MCF 10A (cell line): ENCODE measurements at regions of chr5 and their contacts with region 1.

Region 1: DNA sequence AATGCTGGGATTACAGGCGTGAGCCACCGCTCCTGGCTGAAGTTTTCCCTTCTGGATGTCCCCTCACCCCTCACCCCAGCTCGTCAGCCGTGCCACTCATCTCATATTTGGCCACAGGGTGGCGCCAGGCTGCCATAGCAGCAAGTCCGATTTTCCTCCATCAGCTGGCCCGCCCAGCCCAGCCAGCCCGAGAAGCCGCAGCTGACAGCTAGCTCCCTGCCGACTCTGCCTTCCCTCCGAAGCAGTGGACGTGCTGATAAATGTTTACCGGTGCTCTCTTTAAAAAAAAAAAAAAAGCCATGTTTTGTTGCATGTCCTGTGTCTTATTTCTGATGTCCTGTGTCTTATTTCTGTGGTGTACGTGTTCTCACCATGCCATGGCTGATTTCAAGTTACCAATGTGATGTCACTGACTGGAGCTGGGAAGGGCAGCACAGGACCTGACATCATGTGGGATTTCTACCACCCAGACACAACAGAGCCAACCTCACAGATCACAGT is 58.3 kb downstream of the PFDN1 start:
- DNase-seq: peak; percentile 91
- H3K4me3 Mint-ChIP-seq: no peak overlapping the region
- H3K27ac Mint-ChIP-seq: no peak overlapping the region
- H3K4me1 Mint-ChIP-seq: peaks cover 36% of the 10 kb centered on the region
- H3K27me3 Mint-ChIP-seq: no peaks in the 10 kb centered on the region
- CTCF ChIP-seq: peak; percentile 94

Region 2: GRCh38 chr5:138565100-138565821 is 1679.3 kb before region 1 on chr5:
- CTCF ChIA-PET with region 1: no interaction called
- POLR2A ChIA-PET with region 1: no interaction called
- intact Hi-C with region 1: no loop called
- DNase-seq: no peak
- H3K4me3 Mint-ChIP-seq: no peak overlapping the region
- H3K27ac Mint-ChIP-seq: no peak overlapping the region
- H3K4me1 Mint-ChIP-seq: peaks cover 29% of the 10 kb centered on the region
- H3K27me3 Mint-ChIP-seq: no peaks in the 10 kb centered on the region
- CTCF ChIP-seq: no peak

Region 3: DNA sequence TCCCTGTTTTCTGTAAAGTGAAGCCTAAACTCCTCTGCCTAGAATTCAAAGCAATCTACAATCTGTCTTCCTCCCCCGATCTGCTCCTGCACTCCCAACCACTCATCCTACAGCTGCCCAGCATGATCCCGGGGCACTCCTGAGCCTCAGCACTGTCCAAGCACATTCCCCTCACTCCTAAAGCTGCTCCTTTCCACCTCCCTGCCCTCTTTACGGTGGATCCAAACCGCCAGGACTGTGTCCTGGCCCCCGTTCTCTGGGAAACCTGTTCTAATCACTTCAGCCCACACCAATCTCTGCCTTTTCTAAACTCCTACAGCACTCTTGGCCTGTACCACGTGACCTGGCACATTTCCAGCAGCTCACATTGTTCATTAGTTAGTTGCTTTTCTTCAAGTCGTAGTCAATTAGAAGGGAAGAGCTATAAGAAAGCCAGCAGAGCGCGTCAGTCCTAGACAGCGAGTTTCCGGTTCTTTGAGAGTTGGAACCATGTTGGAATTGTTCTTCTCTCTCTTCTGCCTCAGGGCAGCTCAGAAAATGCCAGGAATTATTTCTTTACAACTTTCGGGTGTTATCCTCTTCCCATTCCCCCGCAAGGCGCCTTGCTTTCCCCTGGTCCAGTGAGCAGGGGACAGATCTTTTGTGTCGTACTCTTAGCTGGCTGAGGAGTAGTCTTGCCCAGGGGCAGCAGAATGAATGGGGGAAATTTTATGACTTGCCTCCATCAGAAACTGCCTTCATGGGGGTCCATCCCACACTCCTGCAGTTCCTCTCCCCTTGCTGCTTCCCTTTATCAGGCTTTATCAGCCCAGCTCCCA is 262.2 kb before region 1 on chr5:
- CTCF ChIA-PET with region 1: no interaction called
- POLR2A ChIA-PET with region 1: no interaction called
- intact Hi-C with region 1: no loop called
- DNase-seq: peak; percentile 59
- H3K4me3 Mint-ChIP-seq: no peak overlapping the region
- H3K27ac Mint-ChIP-seq: no peak overlapping the region
- H3K4me1 Mint-ChIP-seq: peaks cover 12% of the 10 kb centered on the region
- H3K27me3 Mint-ChIP-seq: peaks cover 36% of the 10 kb centered on the region
- CTCF ChIP-seq: no peak

Region 4: GRCh38 chr5:140042643-140043500 is 201.7 kb before region 1 on chr5 and contains the start of gene NRG2:
- CTCF ChIA-PET with region 1: no interaction called
- POLR2A ChIA-PET with region 1: no interaction called
- intact Hi-C with region 1: no loop called
- DNase-seq: peak; percentile 63
- H3K4me3 Mint-ChIP-seq: peak within 1 kb of the TSS; percentile 69
- H3K27ac Mint-ChIP-seq: no peak within 1 kb of the TSS
- H3K4me1 Mint-ChIP-seq: peaks cover 32% of the 10 kb centered on the region
- H3K27me3 Mint-ChIP-seq: peaks cover 23% of the 10 kb centered on the region
- CTCF ChIP-seq: peak; percentile 57
- total RNA-seq, gene NRG2: 0.23 TPM in 1 of 2 replicates, not detected in the other

Region 5: DNA sequence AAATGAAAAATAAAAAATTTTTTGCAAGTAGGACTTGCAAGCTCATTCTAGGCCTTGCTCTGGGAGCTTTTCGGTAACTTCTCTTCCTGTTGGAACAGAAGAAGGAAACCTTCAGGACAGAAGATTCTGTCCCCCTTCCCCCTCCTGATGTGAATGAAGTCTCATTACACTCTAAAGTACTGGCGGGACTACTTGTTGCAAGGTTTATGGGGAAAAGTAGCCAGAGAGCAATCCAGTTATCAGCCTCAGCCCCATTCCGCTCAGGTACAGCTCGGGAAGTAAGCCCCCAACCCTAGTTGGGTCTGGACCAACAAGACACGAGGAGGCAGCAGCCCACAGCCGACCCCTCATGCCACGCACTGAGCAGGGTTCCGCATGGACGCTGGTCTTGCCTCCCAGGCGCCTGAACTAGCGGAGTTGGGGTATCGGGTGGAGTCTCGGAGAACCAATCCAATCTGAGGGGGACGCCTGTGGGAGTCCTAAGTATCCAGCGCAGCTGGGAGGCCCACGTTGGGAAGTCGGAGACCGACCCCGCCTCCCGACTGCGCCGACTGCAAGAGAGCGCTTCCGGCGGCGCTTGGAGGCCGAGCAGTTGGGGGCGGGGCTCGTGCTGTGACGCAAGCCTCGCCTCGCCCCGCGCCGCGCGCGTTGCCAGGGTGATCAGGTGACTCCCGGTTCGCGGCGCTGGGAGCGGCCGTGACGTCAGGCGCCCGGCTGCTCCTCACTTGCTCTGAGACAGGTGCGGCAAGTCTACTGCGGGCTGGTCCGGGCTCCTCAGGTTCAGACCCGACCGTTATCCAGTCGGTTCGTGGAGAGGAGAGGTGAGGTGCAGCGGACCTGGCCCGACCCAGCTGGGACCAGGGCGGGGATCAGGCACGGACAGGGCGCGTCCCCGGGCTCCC is 69.9 kb before region 1 on chr5 and contains the start of gene CYSTM1:
- CTCF ChIA-PET with region 1: interaction called, 16 read pairs
- POLR2A ChIA-PET with region 1: interaction called, 20 read pairs
- intact Hi-C with region 1: loop called (anchors 2 kb)
- DNase-seq: peak; percentile 98
- H3K4me3 Mint-ChIP-seq: peak within 1 kb of the TSS; percentile 89
- H3K27ac Mint-ChIP-seq: peak within 1 kb of the TSS; percentile 98
- H3K4me1 Mint-ChIP-seq: peaks cover 11% of the 10 kb centered on the region
- H3K27me3 Mint-ChIP-seq: no peaks in the 10 kb centered on the region
- CTCF ChIP-seq: no peak
- total RNA-seq, gene CYSTM1: 59.4 and 105 TPM in 2 replicates

Region 6: GRCh38 chr5:140261403-140262171 is 17.0 kb after region 1 on chr5:
- CTCF ChIA-PET with region 1: interaction called, 201 read pairs
- POLR2A ChIA-PET with region 1: interaction called, 28 read pairs
- intact Hi-C with region 1: no loop called
- DNase-seq: peak; percentile 95
- H3K4me3 Mint-ChIP-seq: no peak overlapping the region
- H3K27ac Mint-ChIP-seq: peak overlapping the region; percentile 85
- H3K4me1 Mint-ChIP-seq: peaks cover 53% of the 10 kb centered on the region
- H3K27me3 Mint-ChIP-seq: no peaks in the 10 kb centered on the region
- CTCF ChIP-seq: no peak

Region 7: DNA sequence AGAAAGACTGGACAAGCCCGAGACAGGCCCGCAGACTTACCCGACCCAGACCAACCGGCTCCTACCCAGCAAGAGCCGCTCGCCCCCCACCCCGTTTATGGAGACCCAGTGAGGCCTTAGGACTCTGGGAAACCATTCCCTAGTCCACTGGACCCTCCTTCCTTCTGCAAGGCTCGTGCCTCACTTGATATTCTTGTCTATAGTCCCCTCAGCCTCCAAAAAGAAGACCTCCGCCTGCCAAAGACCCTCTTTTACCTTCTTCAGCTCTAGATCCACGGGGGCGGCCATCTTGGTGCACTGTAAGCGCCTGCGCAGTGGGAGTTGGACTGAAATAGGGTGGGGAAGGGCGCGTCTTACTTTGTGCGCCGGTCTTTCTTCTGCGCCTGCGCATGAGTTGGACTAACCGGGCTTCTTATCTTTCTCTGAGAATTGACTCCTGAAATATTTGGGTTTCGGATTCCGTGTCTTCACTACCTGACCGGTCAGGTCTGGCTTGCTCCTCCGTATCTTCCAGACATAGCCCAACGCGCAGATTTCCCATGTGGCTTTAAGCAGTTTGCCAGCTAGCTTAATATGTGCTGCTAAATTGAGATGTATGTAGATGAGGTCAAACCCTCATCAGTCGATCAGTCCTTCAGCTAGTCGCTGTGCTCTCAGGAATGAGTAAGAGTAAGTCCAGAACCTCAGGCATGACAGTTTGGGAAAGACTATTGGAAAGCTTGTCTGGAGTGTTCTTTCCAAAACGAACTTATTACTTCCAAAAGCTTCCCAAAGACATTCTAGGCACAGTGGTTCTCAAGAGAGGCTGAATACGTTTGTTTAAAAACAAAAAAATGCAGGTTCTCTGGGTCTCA is 58.4 kb after region 1 on chr5 and contains the start of gene PFDN1:
- CTCF ChIA-PET with region 1: interaction called, 6 read pairs
- POLR2A ChIA-PET with region 1: interaction called, 11 read pairs
- intact Hi-C with region 1: loop called (anchors 5 kb)
- DNase-seq: peak; percentile 99
- H3K4me3 Mint-ChIP-seq: peak within 1 kb of the TSS; percentile 100
- H3K27ac Mint-ChIP-seq: peak within 1 kb of the TSS; percentile 100
- H3K4me1 Mint-ChIP-seq: peaks cover 30% of the 10 kb centered on the region
- H3K27me3 Mint-ChIP-seq: no peaks in the 10 kb centered on the region
- CTCF ChIP-seq: no peak
- total RNA-seq, gene PFDN1: 94.7 and 102 TPM in 2 replicates

Region 8: DNA sequence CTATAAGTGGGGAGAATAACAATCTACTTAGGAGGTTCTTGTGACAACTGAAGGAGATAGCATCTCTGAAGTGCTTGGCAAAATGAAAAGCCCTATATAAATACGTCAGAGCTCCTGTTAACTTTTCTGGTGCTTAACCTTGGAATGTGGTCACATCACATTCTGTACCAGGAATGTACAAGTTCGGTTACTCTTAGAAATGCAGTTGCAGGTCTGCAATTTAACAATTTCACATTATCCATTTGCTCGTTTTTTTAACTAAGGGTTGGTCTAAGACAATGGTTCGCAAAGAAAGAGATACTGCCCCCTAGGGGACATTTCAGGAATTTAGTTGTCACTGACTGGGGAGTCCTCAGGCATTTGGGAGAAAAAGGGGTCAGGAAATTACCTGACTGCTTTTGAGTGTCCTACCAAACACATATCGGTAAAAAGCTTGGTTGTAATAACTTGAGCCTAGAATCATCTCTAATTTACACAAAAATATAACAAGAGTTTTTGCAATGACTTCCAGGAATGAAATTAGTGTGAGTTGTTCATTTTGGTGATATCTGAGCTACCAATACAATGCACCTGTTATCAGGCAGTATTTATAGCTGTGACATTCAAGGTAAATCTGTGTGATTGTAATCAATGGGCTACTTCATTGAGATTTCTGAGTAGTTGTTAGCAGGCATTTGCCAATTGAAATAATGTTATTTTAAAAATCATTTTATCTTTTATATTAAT is 107.2 kb after region 1 on chr5:
- CTCF ChIA-PET with region 1: interaction called, 1,450 read pairs
- POLR2A ChIA-PET with region 1: interaction called, 135 read pairs
- intact Hi-C with region 1: loop called (anchors 1 kb)
- DNase-seq: peak; percentile 92
- H3K4me3 Mint-ChIP-seq: no peak overlapping the region
- H3K27ac Mint-ChIP-seq: no peak overlapping the region
- H3K4me1 Mint-ChIP-seq: peaks cover 28% of the 10 kb centered on the region
- H3K27me3 Mint-ChIP-seq: no peaks in the 10 kb centered on the region
- CTCF ChIP-seq: peak; percentile 95

Region 9: GRCh38 chr5:140547508-140548299 is 303.1 kb after region 1 on chr5 and contains the start of gene EIF4EBP3:
- CTCF ChIA-PET with region 1: interaction called, 4 read pairs
- POLR2A ChIA-PET with region 1: no interaction called
- intact Hi-C with region 1: loop called (anchors 10 kb)
- DNase-seq: peak; percentile 97
- H3K4me3 Mint-ChIP-seq: peak within 1 kb of the TSS; percentile 77
- H3K27ac Mint-ChIP-seq: peak within 1 kb of the TSS; percentile 80
- H3K4me1 Mint-ChIP-seq: peaks cover 27% of the 10 kb centered on the region
- H3K27me3 Mint-ChIP-seq: no peaks in the 10 kb centered on the region
- CTCF ChIP-seq: peak; percentile 74
- total RNA-seq, gene EIF4EBP3: 25.3 and 35.3 TPM in 2 replicates